Left colon (tissue), 2 donors: ENCODE measurements at regions of chr13 and their contacts with region 1.

Region 1: DNA sequence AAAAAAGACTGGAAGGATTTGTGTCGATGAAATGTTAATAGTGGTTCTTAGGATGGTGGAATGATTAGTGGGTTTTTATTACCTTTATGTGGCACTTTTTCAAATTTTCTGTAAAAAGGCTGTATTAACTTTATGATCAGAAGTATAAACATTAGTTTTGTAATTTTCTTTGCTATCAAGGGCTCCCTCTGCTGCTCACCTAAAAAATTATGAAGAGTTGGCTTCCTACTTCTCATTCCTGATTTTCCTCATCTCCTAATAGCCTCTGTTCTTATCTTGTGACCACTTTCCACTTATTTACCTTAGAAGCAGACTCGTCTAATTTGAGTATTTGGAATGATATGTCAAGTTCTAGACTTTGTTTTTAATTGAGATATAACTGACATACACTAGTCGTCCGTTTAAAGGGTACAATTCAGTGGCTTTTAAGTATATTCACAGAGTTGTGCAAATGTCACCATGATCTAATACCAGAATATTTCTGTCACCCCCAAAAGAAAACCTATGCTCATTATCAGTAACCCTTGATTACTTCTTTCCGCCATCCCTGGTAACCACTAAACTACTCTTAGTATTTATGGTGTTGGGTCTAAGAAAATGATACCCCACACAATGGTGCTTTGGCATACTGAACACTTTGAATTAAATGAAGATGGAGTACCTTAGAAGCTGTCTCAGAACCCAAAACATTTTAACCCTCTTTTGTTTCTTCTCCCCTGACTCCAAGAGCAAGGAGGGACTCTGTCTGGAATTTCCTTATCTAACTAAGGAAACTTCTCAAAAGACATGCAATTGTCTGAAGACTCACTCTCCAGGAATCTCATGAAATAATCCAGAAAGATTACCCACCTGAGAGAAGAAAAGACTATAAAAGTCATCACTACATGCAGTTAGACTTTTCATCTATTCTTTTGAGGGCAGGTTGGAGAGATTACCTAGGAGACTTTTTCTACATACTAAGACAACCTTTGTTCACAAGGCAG is 311.3 kb downstream of the DLEU7 start:
- DNase-seq: no peak
- ATAC-seq: peak; percentile 40

Region 2: DNA sequence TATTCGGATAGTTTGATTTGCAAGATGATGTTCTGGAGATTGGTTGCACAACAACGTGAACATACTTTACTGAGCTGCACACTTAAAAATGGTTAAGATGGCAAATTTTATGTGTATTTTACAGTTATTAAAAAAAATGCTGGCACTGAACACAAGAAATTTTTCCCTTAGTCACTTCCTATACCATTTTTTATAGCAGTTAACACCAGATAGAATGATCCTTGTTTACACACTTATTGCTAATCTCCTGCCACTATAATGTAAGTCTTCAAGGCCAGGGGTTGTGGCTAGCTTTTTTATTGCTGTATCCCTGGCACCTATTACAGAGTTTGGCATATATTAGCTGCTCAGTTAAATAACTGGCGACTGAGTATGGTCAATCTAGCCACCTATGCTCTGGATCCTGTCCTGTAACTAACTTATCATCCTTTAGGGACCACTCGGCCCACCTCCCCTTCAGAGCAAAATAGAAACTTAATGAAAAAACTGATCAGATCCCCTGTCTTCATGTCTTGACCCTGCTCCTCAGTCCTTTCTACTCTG is 838.9 kb before region 1 on chr13:
- intact Hi-C with region 1: no loop called
- DNase-seq: no peak
- ATAC-seq: peak; percentile 36

Region 3: GRCh38 chr13:49976314-49977258 is 555.6 kb before region 1 on chr13:
- intact Hi-C with region 1: loop called in 1 of 2 experiments (anchors 10 kb)
- DNase-seq: peak; percentile 49 to 82
- ATAC-seq: peak; percentile 80

Region 4: DNA sequence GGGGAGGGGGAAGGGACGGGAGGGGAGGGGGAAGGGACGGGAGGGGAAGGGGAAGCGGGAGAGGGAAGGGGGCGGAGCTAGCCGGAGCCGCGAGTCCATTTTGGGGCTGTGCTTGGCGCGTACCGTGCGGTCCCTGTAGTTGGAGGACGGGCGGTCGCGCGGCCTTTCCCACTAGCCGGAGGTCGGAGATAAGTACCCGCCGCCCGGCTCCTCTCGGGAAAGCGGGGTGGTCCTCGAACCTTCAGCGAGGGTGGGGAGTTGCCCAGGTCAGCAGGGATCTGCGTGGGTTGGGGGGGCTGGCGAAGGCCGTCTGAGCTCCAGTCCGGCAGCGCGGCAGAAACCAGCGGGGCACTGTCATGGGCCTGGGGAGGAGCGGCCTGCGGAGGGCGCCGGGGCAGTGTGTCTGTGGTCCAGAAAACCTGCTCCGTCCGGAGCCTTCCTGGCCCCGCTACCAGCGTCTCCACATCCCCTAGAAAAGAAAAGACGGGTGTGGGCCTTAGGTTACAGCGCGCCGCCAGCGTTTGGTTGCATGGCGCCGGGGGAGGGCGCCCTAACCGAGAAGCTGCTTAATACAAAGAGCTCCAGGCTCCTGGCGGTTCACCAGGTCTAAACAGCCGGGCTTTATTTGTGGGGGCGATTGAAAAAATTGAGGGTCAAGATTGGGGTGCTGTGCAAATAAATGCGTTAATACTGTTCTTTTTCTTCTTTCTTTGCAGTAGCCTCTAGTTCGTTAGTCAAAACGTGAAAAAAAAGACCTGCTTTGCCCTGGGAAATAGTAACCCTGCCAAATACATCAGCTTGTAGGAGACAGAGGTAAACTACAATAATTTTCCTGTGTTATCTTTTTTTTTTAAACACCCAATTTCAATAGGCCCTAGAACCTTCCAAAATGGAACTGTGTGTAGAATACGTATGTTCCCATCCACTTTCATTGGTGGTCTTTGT is 535.0 kb before region 1 on chr13 and contains the start of gene TRIM13:
- intact Hi-C with region 1: loop called in 1 of 2 experiments (anchors 5 kb)
- DNase-seq: peak; percentile 90 to 94
- ATAC-seq: peak; percentile 79
- total RNA-seq, gene TRIM13: 26.0 to 32.8 TPM

Region 5: DNA sequence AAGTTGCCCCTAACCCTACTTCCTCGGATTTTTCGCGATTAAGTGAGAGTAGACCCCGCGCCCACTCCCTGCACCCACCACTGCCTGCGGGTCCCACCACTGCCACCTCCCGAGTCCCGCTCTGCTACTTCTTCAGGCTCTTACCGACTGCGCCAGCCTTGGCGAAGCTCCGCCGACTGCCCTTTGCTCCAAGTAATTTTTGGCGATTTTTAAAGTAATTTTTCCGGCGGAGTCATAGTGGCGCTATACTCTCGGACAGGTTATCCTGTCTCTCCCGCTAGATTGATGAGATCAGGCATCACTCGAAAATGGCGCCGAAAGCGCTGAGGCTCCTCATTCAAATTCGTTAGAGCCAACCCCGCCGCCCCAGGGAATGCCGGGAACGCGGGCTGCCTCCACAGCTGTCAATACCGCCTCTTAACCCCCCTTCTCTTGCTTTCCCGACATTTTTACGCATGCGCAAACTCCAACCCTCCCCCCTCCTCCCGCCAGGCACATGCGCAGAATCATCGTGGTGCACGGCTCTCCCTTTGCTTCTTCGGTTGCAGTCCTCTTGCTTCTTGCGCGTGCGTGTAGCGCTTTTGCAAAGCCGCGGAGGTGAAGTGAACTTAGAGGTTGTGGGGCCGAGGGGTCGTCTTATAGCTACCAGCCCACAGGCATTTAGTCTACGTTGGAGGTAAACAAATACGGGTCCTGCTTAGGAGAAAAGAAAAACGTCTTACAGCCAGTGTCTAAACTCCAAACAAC is 450.4 kb before region 1 on chr13:
- intact Hi-C with region 1: loop called in 1 of 2 experiments (anchors 10 kb)
- DNase-seq: peak; percentile 98
- ATAC-seq: peak; percentile 79

Region 6: GRCh38 chr13:50911937-50912795 is 380.0 kb after region 1 on chr13:
- intact Hi-C with region 1: loop called in 1 of 2 experiments (anchors 5 kb)
- DNase-seq: peak; percentile 85 to 96
- ATAC-seq: peak; percentile 36